ENCODE measurements at regions of chr13 and their contacts with region 1.

Region 1: GRCh38 chr13:111049802-111050538 is 65.1 kb upstream of the ARHGEF7 start:
- DNase-seq: no peak
- ATAC-seq: no peak
- H3K4me3 ChIP-seq: no peak overlapping the region
- H3K4me3 Mint-ChIP-seq: no peak overlapping the region
- H3K27ac ChIP-seq: no peak overlapping the region
- H3K27ac Mint-ChIP-seq: no peak overlapping the region
- H3K4me1 ChIP-seq: no peaks in the 10 kb centered on the region
- H3K4me1 Mint-ChIP-seq: peaks cover 0 to 11% (median 0%) of the 10 kb centered on the region in 7 donors
- H3K27me3 ChIP-seq: no peaks in the 10 kb centered on the region
- H3K27me3 Mint-ChIP-seq: peaks cover 4 to 19% (median 18%) of the 10 kb centered on the region in 5 donors

Region 2: GRCh38 chr13:110161112-110161882 is 888.7 kb before region 1 on chr13:
- CTCF ChIA-PET with region 1: no interaction called
- POLR2A ChIA-PET with region 1: no interaction called
- intact Hi-C with region 1: no loop called
- DNase-seq: no peak
- ATAC-seq: peak; percentile 71
- H3K4me3 ChIP-seq: no peak overlapping the region
- H3K4me3 Mint-ChIP-seq: no peak overlapping the region
- H3K27ac ChIP-seq: no peak overlapping the region
- H3K27ac Mint-ChIP-seq: no peak overlapping the region
- H3K4me1 ChIP-seq: no peaks in the 10 kb centered on the region
- H3K4me1 Mint-ChIP-seq: peaks cover 0 to 2% (median 0%) of the 10 kb centered on the region in 7 donors
- H3K27me3 ChIP-seq: no peaks in the 10 kb centered on the region
- H3K27me3 Mint-ChIP-seq: peaks cover 0 to 30% (median 4%) of the 10 kb centered on the region in 5 donors

Region 3: DNA sequence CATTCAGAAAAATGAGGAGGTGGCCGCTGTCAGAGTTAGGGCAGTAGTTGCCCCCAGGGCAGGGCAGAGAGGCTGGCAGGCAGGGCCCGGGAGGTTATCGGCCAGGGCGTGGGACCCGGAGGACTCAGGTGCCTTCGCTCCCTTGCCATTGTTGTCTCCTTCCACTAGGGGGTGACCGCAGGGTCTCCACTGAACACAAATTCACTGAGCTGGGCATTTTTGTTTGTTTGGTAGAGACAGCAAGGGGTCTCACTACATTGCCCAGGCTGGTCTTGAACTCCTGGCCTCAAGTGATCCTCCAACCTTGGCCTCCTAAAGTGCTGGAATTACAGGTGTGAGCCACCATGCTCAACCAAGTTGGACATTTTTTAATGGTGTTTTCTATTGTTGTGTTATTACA is 369.1 kb before region 1 on chr13:
- CTCF ChIA-PET with region 1: no interaction called
- POLR2A ChIA-PET with region 1: no interaction called
- intact Hi-C with region 1: loop called in 1 of 2 experiments (anchors 5 kb)
- DNase-seq: peak in 3 of 9 donors; percentile 8 to 22 (median 21)
- ATAC-seq: no peak
- H3K4me3 ChIP-seq: no peak overlapping the region
- H3K4me3 Mint-ChIP-seq: no peak overlapping the region
- H3K27ac ChIP-seq: no peak overlapping the region
- H3K27ac Mint-ChIP-seq: no peak overlapping the region
- H3K4me1 ChIP-seq: no peaks in the 10 kb centered on the region
- H3K4me1 Mint-ChIP-seq: peaks cover 4 to 22% (median 12%) of the 10 kb centered on the region in 7 donors
- H3K27me3 ChIP-seq: no peaks in the 10 kb centered on the region
- H3K27me3 Mint-ChIP-seq: no peaks in the 10 kb centered on the region

Region 4: GRCh38 chr13:110944121-110944967 is 105.6 kb before region 1 on chr13:
- CTCF ChIA-PET with region 1: no interaction called
- POLR2A ChIA-PET with region 1: no interaction called
- intact Hi-C with region 1: loop called in 1 of 2 experiments (anchors 1 kb)
- DNase-seq: peak in 3 of 9 donors; percentile 3 to 37 (median 10)
- ATAC-seq: peak; percentile 33
- H3K4me3 ChIP-seq: no peak overlapping the region
- H3K4me3 Mint-ChIP-seq: no peak overlapping the region
- H3K27ac ChIP-seq: no peak overlapping the region
- H3K27ac Mint-ChIP-seq: no peak overlapping the region
- H3K4me1 ChIP-seq: no peaks in the 10 kb centered on the region
- H3K4me1 Mint-ChIP-seq: peaks cover 0 to 22% (median 0%) of the 10 kb centered on the region in 7 donors
- H3K27me3 ChIP-seq: no peaks in the 10 kb centered on the region
- H3K27me3 Mint-ChIP-seq: peaks cover 0 to 3% (median 0%) of the 10 kb centered on the region in 5 donors